Activated CD4-positive, alpha-beta T cell treated with anti-CD3 and anti-CD28 coated beads, Interleukin-2, amount 10 ng/mL, durations not matched to agents 24 days and 14 days (primary cell): ENCODE measurements at regions of chr10 and their contacts with region 1.

Region 1: GRCh38 chr10:103685880-103686669 is 169.3 kb downstream of the SH3PXD2A start:
- DNase-seq: peak; percentile 94
- H3K4me3 Mint-ChIP-seq: no peak overlapping the region
- H3K27ac Mint-ChIP-seq: no peak overlapping the region
- H3K4me1 Mint-ChIP-seq: no peaks in the 10 kb centered on the region
- H3K27me3 Mint-ChIP-seq: peaks cover 8% of the 10 kb centered on the region

Region 2: GRCh38 chr10:103504181-103504783 is 181.8 kb before region 1 on chr10:
- intact Hi-C with region 1: loop called (anchors 5 kb)
- DNase-seq: peak; percentile 84
- H3K4me3 Mint-ChIP-seq: peak overlapping the region; percentile 53
- H3K27ac Mint-ChIP-seq: peak overlapping the region; percentile 59
- H3K4me1 Mint-ChIP-seq: peaks cover 31% of the 10 kb centered on the region
- H3K27me3 Mint-ChIP-seq: peaks cover 59% of the 10 kb centered on the region

Region 3: DNA sequence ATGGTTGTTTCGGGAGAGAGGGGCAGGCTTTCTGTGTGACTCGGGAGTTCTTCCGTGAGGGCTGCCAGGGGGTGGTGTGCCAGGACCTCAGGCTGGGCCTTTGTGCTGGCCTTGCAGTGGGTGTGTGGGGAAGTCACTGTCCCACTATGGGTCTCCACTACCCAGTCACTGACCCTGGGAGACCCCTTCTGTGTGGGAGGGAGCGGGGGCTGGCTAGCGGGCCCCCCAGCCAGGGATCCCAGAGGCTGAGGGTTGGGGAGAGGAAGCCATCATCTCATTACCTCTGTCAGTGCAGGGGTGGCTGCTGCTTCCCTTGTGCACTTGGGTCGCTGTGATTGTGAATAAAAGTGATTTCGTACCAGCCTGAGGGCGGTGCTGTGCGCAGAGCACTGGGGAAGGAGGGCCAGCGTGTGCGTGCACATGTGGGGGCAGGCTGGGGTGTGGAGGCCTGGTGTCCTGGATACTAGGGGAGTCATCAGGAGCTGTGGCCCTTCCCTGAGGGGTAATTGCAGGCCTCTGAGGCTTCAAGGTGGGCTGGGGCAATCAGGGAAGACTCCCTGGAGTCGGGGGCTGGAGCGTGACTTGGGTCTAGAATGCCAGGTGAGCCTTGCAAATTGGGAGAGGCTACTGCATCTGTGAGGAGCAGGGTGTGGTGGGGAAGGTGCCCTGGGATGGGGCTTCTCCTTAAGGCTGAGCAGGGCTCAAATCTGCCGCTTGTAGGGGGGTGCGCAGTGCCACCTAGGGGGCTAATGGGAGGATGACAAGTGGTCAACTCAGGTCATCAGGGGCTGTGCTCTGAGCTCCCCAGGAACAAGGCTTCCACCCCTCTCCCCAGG is 93.7 kb before region 1 on chr10:
- intact Hi-C with region 1: no loop called
- DNase-seq: peak; percentile 78
- H3K4me3 Mint-ChIP-seq: no peak overlapping the region
- H3K27ac Mint-ChIP-seq: no peak overlapping the region
- H3K4me1 Mint-ChIP-seq: no peaks in the 10 kb centered on the region
- H3K27me3 Mint-ChIP-seq: no peaks in the 10 kb centered on the region

Region 4: DNA sequence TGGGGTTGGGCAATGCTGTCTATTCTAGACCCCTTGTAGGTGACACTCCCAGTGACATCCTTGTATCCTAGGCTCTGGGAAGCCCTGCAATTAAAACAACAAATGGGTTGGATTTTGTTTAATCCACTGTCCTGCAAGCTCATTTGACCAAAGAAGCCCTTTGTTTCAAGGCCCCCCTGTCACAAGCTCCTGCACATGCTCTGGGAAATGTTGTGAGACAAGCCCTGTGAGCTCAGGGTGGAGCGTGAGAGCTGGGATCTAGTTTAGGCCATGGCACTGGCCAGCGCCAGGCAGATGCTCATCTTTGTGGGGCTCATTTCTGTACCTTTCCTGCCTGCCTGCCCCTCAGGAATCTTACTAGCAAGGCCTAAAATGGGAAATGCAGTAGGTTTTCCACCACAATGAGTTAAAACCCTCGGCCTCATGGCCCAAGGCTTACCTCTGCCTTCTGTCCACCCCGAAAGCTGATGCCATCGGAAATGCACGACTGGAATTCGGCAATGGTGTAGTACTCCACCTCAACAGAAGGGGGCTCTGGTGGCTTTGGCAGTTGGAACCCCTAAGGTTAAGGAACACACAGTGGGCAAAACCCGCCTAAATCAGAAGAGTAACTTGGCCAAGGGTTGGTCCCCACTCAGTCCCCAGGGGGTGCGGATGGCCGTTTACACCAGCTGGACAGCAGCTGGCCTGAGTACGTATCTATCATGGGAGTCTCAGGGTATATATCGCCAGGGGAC is 80.5 kb before region 1 on chr10:
- intact Hi-C with region 1: loop called (anchors 1 kb)
- DNase-seq: peak; percentile 86
- H3K4me3 Mint-ChIP-seq: no peak overlapping the region
- H3K27ac Mint-ChIP-seq: no peak overlapping the region
- H3K4me1 Mint-ChIP-seq: peaks cover 3% of the 10 kb centered on the region
- H3K27me3 Mint-ChIP-seq: no peaks in the 10 kb centered on the region

Region 5: GRCh38 chr10:103659674-103660363 is 26.3 kb before region 1 on chr10:
- intact Hi-C with region 1: loop called (anchors 1 kb)
- DNase-seq: peak; percentile 91
- H3K4me3 Mint-ChIP-seq: peak overlapping the region; percentile 94
- H3K27ac Mint-ChIP-seq: peak overlapping the region; percentile 89
- H3K4me1 Mint-ChIP-seq: peaks cover 8% of the 10 kb centered on the region
- H3K27me3 Mint-ChIP-seq: no peaks in the 10 kb centered on the region